Mammary epithelial cell (primary cell): ENCODE measurements at regions of chr6 and their contacts with region 1.

Region 1: DNA sequence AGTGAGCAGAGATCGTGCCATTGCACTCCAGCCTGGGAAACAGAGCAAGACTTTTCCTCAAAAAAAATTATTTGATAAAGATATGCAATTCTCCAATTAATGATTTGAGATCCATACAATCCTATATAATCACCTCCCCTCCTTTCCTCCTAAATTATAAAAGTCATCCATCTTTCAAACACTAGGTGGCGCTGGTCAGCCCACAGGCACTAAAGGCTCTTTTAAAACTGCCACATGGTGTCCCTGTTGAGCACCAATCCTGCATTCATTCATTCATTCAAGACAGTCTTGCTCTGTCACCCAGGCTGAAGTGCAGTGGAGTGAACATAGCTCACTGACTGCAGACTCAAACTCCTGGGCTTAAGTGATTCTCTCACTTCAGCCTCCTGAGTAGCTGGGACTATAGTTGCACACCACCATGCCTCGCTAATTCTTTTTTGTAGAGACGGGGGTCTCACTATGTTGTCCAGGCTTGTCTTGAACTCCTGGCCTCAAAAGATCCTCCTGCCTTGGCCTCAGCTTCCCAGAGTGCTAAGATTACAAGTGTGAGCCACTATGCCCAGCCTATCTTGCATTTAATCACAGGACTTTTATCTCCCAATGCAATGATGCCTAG is 58.7 kb upstream of the SLC2A12 start:
- DNase-seq: peak; percentile 52
- H3K4me3 ChIP-seq: no peak overlapping the region
- H3K27ac ChIP-seq: no peak overlapping the region
- H3K4me1 ChIP-seq: no peaks in the 10 kb centered on the region
- H3K27me3 ChIP-seq: no peaks in the 10 kb centered on the region
- CTCF ChIP-seq: peak; percentile 96 to 97

Region 2: GRCh38 chr6:134123666-134124208 is 12.6 kb after region 1 on chr6:
- CTCF ChIA-PET with region 1: interaction called, 14 read pairs
- dilution Hi-C with region 1: no loop called
- in situ Hi-C with region 1: no loop called
- intact Hi-C with region 1: loop called (anchors 1 kb)
- DNase-seq: peak; percentile 80
- H3K4me3 ChIP-seq: no peak overlapping the region
- H3K27ac ChIP-seq: no peak overlapping the region
- H3K4me1 ChIP-seq: peaks cover 11% of the 10 kb centered on the region
- H3K27me3 ChIP-seq: no peaks in the 10 kb centered on the region
- CTCF ChIP-seq: peak; percentile 60 to 82

Region 3: DNA sequence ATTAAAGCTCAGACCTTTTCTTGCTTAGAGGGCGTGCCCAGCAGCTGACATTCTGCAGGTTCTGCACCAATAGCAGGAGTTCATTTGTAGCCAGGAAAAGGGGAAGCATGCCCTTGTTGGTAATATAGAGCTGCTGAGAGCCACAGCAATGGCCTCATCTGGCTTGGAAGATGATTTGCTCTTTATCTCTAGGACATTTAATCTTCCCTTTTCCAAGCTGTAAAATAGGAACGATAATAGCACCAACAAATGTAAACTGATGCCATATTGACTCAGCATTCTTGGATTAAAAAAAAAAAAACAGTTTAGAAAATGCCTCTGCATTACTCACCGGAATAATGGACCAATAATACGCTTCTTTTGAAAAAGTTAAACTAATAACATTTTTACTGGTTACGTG is 34.6 kb after region 1 on chr6:
- CTCF ChIA-PET with region 1: no interaction called
- dilution Hi-C with region 1: no loop called
- in situ Hi-C with region 1: no loop called
- intact Hi-C with region 1: no loop called
- DNase-seq: no peak
- H3K4me3 ChIP-seq: no peak overlapping the region
- H3K27ac ChIP-seq: no peak overlapping the region
- H3K4me1 ChIP-seq: no peaks in the 10 kb centered on the region
- H3K27me3 ChIP-seq: no peaks in the 10 kb centered on the region
- CTCF ChIP-seq: no peak

Region 4: GRCh38 chr6:134882426-134883038 is 771.4 kb after region 1 on chr6:
- CTCF ChIA-PET with region 1: no interaction called
- dilution Hi-C with region 1: no loop called
- in situ Hi-C with region 1: no loop called
- intact Hi-C with region 1: loop called (anchors 1 kb)
- DNase-seq: peak; percentile 67
- H3K4me3 ChIP-seq: no peak overlapping the region
- H3K27ac ChIP-seq: no peak overlapping the region
- H3K4me1 ChIP-seq: no peaks in the 10 kb centered on the region
- H3K27me3 ChIP-seq: no peaks in the 10 kb centered on the region
- CTCF ChIP-seq: peak; percentile 98